Panc1 (cell line): ENCODE measurements at regions of chr1 and their contacts with region 1.

Region 1: DNA sequence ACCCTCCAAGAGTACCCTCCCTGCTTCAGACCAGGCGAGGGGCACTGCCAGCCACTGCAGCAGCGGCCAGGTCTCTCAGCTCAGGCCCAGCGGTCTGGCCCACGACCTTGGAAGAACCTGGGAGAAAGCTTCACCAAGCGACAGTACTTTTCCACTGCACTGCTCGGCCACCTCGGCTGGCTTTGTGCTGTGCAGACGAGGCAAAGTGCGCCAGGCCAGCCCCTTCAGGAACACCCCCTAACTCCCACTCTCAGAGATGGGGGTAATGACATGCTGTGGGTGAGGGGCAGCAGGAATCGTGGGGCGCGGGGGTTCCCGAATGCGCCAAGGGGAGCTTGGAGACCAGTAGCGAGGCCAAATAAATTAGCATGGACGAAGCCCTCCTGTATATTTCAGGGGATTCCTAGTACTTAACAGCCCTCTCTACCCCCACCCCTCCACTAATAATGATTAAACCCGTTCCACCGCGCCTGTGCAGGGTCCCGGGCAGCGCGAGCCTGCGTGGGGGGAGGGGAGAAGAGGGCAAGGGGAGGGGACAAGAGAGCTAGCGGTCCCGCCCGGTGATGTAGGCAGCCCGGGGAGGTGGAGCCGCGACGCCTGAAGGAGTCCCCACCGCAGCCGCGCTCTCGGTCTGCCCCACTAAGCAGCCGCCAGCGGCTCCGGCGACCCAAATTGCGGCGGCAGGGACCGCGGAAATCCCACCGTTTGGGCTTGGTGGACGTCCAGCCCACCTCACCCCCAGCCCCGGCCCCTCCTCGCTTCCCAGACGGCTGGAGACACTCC is at the start of gene FAM43B:
- DNase-seq: no peak
- ATAC-seq: peak; percentile 78
- H3K4me3 ChIP-seq: peak within 1 kb of the TSS; percentile 34 to 46
- H3K27ac ChIP-seq: peak within 1 kb of the TSS; percentile 54
- H3K4me1 ChIP-seq: peaks cover 11% of the 10 kb centered on the region
- H3K27me3 ChIP-seq: peaks cover 7% of the 10 kb centered on the region; the same call in 1 of the 2 replicates
- CTCF ChIP-seq: no peak
- total RNA-seq, gene FAM43B: 3.0 TPM

Region 2: DNA sequence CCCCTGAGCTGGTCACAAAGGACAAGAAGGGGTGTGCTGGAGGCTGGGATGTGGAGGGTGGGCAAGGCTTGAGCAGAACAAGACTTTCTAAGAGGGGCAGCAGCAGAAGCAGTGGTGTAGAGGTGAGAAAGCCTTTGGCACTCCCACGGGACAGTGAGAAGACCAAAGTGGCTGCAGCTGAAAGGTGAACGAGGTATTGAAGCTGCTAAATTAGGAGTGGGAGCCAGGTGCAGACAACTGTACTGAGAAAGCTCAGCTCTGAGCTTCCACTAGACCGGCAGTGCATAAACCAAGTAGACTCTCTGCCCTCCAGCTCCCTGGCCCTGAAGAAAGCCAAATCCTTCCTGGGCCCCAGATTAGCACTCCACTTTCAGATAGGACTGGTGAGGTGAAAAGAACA is 168.5 kb before region 1 on chr1:
- CTCF ChIA-PET with region 1: no interaction called
- POLR2A ChIA-PET with region 1: interaction called, 10 read pairs
- in situ Hi-C with region 1: no loop called
- intact Hi-C with region 1: no loop called
- DNase-seq: no peak
- ATAC-seq: no peak
- H3K4me3 ChIP-seq: no peak overlapping the region
- H3K27ac ChIP-seq: no peak overlapping the region
- H3K4me1 ChIP-seq: no peaks in the 10 kb centered on the region
- H3K27me3 ChIP-seq: peaks cover 4% of the 10 kb centered on the region; the same call in 1 of the 2 replicates
- CTCF ChIP-seq: no peak

Region 3: GRCh38 chr1:20511518-20512370 is 40.4 kb before region 1 on chr1:
- CTCF ChIA-PET with region 1: no interaction called
- POLR2A ChIA-PET with region 1: no interaction called
- in situ Hi-C with region 1: no loop called
- intact Hi-C with region 1: no loop called
- DNase-seq: no peak
- ATAC-seq: no peak
- H3K4me3 ChIP-seq: no peak overlapping the region
- H3K27ac ChIP-seq: no peak overlapping the region
- H3K4me1 ChIP-seq: peaks cover 7% of the 10 kb centered on the region; the same call in 1 of the 2 replicates
- H3K27me3 ChIP-seq: no peaks in the 10 kb centered on the region
- CTCF ChIP-seq: no peak